H1 (cell line): ENCODE measurements at regions of chr22 and their contacts with region 1.

Region 1: DNA sequence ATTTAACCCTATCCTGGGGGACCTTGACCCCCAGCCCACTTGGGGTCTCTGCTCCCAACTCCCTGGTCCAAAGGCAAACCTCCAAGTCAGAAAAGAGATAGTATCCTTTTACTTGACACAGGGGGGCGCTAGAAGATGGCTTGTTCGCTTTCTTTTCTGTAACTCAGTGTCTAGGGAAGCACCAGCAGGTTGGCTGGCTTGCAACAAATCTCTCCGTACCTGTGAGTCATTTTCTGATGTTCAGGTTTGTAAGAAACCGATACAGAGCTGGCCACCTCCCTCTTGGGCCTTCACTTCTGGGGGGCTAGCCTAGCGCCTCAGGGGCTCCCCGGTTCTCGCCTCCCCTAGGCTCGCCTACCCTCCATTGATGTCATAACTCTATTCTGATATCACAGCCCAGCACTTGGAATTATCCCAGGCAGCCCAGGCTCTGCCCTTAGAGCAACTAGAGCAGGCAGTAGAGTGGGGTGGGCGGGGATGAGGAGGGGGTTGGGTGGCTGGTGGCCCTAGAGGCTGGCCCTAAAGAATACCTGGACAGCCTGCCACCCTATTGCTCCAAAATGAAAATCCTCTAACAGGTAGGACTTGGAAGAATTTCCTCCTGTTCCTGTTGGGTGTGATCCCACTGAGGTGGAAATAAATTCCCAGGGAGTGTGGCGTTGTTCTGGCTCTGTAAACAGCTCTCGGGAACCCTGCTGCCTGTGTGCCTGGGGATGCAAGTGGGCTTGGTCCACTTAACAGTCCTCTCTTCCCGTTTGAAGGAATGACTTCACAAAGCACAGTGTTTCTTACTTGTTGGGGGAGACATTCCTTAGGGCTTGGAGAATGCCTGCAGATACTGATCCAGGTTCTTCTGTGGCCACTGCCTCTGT is 69.4 kb downstream of the OSBP2 start:
- DNase-seq: peak; percentile 21 to 61
- H3K4me3 ChIP-seq: no peak overlapping the region
- H3K27ac ChIP-seq: no peak overlapping the region
- H3K4me1 ChIP-seq: peaks cover 0 to 3% (median 2%) of the 10 kb centered on the region in 4 experiments; a peak in 4 of 7 replicates
- H3K27me3 ChIP-seq: no peaks in the 10 kb centered on the region
- CTCF ChIP-seq: peak; percentile 23 to 86 (median 80)
- EP300 ChIP-seq: no peak
- POLR2A ChIP-seq: no peak
- RAD21 ChIP-seq: peak; percentile 92 to 93

Region 2: DNA sequence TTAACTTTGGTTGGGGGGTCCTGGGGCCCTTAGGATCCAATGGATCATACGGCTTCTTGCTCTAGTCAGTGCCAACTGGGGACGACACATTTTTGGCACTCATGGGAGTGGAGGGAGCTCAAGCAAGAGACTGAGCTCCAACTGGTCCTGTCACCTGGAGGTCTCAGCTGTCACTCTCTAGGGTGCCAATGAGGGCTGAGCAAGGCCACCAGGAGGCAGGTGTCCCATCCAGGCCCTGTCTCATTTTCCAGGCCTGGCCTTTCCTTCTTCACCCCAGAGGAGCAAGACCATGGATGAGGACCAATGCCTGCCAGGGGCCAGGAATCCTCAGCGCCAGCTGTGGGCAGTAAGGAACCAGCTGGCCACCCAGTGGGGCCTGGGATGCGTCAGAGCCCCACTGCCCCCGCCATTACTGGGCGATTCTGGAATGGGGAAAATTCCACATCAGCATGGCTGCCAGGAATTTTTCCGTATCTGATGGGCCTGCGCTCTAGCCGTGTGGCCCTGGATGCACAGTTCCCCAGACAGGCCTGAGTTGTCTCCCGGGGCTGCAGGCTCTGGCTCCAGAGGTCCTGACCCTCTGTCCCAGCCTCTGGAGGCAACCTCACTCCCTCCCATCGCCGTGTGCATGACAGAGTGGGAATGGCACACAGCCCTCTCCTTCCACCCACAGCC is 188.9 kb before region 1 on chr22:
- CTCF ChIA-PET with region 1: no interaction called
- POLR2A ChIA-PET with region 1: no interaction called
- DNase-seq: no peak
- H3K4me3 ChIP-seq: peak overlapping the region; percentile 40 to 70 (median 43); a peak in 7 of 8 replicates
- H3K27ac ChIP-seq: no peak overlapping the region
- H3K4me1 ChIP-seq: peaks cover 0 to 15% (median 5%) of the 10 kb centered on the region in 4 experiments; a peak in 5 of 7 replicates
- H3K27me3 ChIP-seq: no peaks in the 10 kb centered on the region
- CTCF ChIP-seq: peak in 1 of 3 experiments; percentile 39; a peak in 1 of 4 replicates
- EP300 ChIP-seq: no peak
- POLR2A ChIP-seq: 0 out of 3 replicates have a peak, but pooled peaks of 1 of the 2 experiments have one; percentile 2
- RAD21 ChIP-seq: no peak

Region 3: DNA sequence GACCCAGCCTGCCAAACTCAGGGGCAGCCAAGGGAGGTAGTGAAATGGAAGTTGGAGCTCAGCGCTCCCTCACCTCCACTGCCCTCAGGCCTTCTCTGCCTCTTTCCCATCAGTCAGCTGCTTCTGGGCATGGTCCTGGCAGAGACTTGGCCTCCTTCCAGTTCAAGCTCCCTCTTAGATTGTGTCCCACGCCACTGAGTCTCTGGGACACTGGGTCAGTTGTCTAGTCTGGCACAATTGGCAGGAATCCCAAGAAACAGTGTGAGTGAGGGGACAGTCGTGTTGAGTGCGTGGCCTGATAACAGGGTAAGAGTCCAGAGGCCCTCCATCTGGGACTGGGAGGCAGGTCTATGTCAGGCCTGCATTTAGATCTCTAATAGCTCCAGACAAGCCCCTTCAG is 135.6 kb before region 1 on chr22:
- CTCF ChIA-PET with region 1: interaction called, 11 read pairs
- POLR2A ChIA-PET with region 1: no interaction called
- DNase-seq: no peak
- H3K4me3 ChIP-seq: no peak overlapping the region
- H3K27ac ChIP-seq: no peak overlapping the region
- H3K4me1 ChIP-seq: no peaks in the 10 kb centered on the region
- H3K27me3 ChIP-seq: no peaks in the 10 kb centered on the region
- CTCF ChIP-seq: no peak
- EP300 ChIP-seq: no peak
- POLR2A ChIP-seq: peak in 1 of 2 experiments; percentile 23; a peak in 1 of 3 replicates
- RAD21 ChIP-seq: no peak

Region 4: GRCh38 chr22:30785527-30785926 is 21.5 kb after region 1 on chr22:
- CTCF ChIA-PET with region 1: no interaction called
- POLR2A ChIA-PET with region 1: no interaction called
- DNase-seq: no peak
- H3K4me3 ChIP-seq: no peak overlapping the region
- H3K27ac ChIP-seq: no peak overlapping the region
- H3K4me1 ChIP-seq: no peaks in the 10 kb centered on the region
- H3K27me3 ChIP-seq: no peaks in the 10 kb centered on the region
- CTCF ChIP-seq: no peak
- EP300 ChIP-seq: no peak
- POLR2A ChIP-seq: no peak
- RAD21 ChIP-seq: no peak

Region 5: DNA sequence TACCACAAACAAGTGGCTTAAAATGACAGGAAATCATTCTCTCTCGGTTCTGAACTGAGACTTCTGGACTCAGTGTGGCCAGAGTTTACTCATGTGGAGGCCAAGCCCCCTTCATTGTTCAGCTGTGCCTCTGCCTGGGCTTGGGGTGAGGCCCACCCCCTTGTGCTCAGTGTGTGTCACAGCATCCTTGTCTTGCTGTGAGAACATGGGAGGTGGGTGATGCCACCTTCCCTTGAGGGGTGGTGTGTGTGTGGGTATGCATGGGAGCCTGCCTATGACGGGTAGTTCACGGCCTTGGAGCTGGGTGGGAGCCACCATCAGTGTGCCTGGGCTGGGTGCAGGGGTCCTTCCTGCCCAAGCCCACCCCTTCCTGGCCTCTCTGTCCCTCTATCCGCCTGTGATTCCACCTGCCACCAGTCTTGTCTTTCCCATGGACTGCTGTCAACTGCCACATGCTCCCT is 102.8 kb after region 1 on chr22:
- CTCF ChIA-PET with region 1: interaction called, 12 read pairs
- POLR2A ChIA-PET with region 1: no interaction called
- DNase-seq: no peak
- H3K4me3 ChIP-seq: no peak overlapping the region
- H3K27ac ChIP-seq: no peak overlapping the region
- H3K4me1 ChIP-seq: peaks cover 0 to 7% (median 0%) of the 10 kb centered on the region in 4 experiments; a peak in 1 of 7 replicates
- H3K27me3 ChIP-seq: no peaks in the 10 kb centered on the region
- CTCF ChIP-seq: peak; percentile 24 to 50 (median 43)
- EP300 ChIP-seq: no peak
- POLR2A ChIP-seq: no peak
- RAD21 ChIP-seq: peak; percentile 35 to 53

Region 6: DNA sequence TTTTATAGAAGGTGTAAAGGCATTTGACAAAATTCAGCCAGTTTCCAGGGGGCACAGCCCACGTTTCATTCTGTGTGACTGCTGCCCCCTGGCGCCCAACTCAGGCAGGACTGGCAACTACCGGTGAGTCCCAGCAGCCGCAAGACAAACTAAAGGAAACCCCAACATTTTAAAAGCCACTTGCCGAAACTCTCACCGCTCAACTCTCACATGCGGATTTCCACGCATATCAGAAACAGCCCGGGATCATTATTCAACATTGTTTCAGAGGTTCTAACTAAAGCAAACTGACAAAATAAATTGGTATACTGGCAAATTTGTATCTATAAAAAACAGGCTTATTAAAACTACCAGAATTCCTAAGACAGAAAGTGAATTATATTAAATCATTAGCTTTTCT is 156.4 kb after region 1 on chr22:
- CTCF ChIA-PET with region 1: interaction called, 58 read pairs
- POLR2A ChIA-PET with region 1: interaction called, 6 read pairs
- DNase-seq: peak; percentile 43 to 97
- H3K4me3 ChIP-seq: no peak overlapping the region
- H3K27ac ChIP-seq: no peak overlapping the region
- H3K4me1 ChIP-seq: no peaks in the 10 kb centered on the region
- H3K27me3 ChIP-seq: no peaks in the 10 kb centered on the region
- CTCF ChIP-seq: peak; percentile 77 to 96 (median 88)
- EP300 ChIP-seq: no peak
- POLR2A ChIP-seq: no peak
- RAD21 ChIP-seq: peak; percentile 79 to 80